ENCODE measurements at regions of chr6 and their contacts with region 1.

Region 1: DNA sequence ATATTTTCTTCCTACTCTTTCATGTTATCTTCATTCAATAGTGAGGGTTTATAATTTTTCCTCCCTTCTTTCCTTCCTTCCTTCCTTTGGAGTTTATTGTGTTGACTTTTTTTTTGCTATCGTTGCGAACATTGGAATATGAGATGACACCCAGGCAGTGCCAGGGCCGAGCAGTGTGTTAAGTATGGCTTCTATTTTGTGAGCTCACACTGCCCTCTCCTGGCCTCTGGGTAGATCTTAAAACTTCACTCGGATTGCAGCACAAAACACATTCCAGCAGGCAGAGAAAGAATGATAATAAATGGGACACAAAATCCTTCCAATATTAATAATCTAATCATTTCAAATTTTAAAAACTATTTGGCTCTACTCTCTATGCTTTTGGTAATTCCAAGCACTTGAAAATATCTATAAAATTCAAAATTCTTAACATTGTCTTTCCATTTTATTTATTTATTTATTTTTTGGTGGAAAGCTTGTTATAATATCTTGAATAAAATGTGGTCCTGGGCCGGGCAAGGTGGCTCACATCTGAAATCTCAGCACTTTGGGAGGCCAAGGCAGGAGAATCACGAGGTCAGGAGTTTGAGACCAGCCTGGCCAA is 147.4 kb upstream of the OLIG3 start:
- DNase-seq: peak; percentile 79
- H3K4me3 ChIP-seq: no peak overlapping the region
- H3K27ac ChIP-seq: no peak overlapping the region
- H3K4me1 ChIP-seq: no peaks in the 10 kb centered on the region
- H3K27me3 ChIP-seq: no peaks in the 10 kb centered on the region
- CTCF ChIP-seq: peak; percentile 54

Region 2: DNA sequence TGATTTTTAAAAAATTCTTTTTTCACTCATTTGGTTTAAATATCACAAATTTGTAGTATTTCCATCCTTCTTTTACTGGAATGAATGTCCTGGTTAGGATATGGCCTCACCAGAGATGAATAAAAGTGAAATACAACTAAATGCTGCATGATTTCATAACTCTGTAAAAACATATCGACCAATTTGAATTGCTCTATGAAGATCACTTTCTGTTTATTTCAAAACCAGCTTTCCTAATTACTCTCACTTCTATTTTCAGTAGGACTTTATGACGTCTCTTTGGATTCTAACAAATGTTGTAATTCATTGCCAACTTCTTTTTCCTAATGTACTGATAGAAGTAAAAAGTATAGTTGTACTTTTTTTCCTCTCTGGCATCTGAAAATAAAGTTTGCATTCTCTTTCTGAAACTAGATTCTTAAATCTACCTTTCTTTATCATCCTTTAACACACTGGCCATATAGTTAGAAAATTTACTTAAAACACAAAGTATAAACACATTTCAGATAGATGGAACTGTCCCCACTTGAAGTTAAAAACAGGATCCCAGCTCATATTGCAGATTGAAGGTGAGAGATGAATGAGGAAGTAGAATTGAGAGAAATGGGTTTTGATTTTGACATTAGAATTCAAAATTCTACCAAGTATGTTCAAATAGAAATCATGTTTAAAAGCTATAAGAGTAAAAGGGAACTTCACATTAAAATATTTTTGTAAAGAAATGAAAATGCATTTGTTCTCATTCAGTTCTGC is 556.5 kb before region 1 on chr6:
- intact Hi-C with region 1: loop called (anchors 5 kb)
- DNase-seq: no peak
- H3K4me3 ChIP-seq: no peak overlapping the region
- H3K27ac ChIP-seq: no peak overlapping the region
- H3K4me1 ChIP-seq: no peaks in the 10 kb centered on the region
- H3K27me3 ChIP-seq: no peaks in the 10 kb centered on the region
- CTCF ChIP-seq: no peak

Region 3: GRCh38 chr6:137094411-137095008 is 547.1 kb before region 1 on chr6:
- intact Hi-C with region 1: loop called (anchors 5 kb)
- DNase-seq: peak; percentile 66
- H3K4me3 ChIP-seq: no peak overlapping the region
- H3K27ac ChIP-seq: no peak overlapping the region
- H3K4me1 ChIP-seq: no peaks in the 10 kb centered on the region
- H3K27me3 ChIP-seq: no peaks in the 10 kb centered on the region
- CTCF ChIP-seq: peak; percentile 52

Region 4: DNA sequence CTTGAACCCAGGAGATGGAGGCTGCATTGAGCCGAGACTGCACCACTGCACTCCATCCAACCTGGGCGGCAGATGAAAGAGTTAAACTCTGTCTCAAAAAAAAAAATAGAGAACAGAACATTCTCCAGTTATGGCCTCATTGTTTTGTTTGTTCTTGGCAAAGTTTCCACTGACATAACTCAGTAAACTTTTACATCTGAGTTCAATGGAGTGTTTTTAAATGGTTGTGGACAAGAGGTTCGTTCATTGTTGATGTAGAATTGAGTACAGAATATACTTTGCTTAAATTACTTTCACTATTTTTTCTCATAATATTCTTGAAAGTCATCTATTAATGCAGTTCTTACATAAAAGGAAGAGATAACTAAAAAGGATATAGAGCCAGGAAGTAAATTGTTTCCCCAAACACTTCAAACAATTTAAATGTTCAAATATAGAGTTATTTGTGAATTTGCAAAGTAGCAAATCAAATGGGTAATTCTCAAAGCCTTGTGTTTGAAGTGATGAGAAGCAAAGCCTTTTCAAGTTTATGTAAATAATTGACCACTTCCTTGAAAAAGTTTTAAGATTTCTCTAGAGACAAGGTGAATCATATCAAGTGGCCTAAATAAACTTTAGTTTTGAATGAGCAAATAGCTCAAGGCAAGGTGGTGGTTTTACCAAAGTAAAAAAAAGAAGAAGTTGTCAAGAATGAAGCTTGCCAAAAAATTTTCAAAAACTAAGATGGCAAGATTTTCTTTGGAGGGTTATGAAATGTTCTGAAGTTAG is 380.0 kb before region 1 on chr6:
- intact Hi-C with region 1: loop called (anchors 10 kb)
- DNase-seq: no peak
- H3K4me3 ChIP-seq: no peak overlapping the region
- H3K27ac ChIP-seq: no peak overlapping the region
- H3K4me1 ChIP-seq: no peaks in the 10 kb centered on the region
- H3K27me3 ChIP-seq: no peaks in the 10 kb centered on the region
- CTCF ChIP-seq: no peak

Region 5: DNA sequence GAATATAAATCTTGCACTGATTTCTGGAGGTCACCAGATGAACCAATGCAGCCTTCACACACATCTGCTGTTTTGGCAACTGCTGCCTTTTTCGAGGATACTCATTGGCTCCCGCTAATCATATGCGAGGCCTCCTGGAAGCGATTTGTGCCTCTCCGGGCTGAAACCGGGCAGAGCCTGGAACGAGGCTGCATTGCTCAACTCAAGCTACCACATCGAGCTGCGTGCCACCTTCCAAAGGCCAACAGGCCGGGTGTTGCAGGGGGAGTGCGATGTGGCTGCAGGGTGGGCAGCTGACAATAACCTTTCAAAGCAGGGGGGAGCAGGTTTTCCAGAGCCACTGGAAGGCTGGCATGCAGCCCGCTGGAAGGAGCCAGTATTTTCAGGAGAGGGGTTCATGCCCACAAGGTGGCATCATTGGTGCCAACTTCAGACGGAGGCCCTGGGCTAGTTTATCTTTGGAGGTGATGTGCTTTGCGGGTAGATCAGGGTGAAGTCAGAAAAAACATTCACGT is 299.8 kb before region 1 on chr6:
- intact Hi-C with region 1: loop called (anchors 10 kb)
- DNase-seq: peak; percentile 38
- H3K4me3 ChIP-seq: no peak overlapping the region
- H3K27ac ChIP-seq: no peak overlapping the region
- H3K4me1 ChIP-seq: no peaks in the 10 kb centered on the region
- H3K27me3 ChIP-seq: no peaks in the 10 kb centered on the region
- CTCF ChIP-seq: peak; percentile 18

Region 6: DNA sequence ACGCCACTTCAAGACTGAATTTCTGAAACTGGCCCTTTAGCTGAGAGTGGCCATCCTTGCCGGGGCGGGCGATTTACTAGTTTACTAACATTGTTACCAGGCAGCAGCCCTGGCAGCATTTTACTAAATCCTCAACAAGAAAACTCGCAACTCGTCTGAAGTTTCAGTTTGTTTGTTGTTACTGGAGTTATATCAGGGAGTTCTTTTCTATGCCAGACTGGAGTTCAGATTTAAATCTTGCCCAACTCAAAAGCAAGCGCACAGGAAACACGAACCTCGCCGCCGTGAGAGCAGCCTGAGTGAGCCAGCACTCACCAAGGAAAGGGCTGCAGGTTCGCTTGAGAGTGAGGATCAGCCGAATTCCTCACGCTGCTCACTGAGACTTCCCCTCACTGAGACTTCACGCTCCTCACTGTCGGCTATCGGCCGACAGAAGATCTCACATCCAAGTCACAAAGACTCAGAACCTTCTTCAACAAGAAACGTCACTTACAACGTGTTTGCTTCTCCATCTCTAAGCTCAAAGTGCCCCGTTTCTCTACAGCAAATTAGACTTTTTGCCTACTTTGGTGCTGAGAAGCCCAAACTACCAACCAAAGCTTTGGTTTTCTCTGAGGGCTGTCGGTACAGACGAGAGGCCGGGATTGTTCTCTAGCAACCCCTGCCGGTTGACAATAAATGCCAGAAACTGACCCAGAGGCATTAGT is 226.3 kb before region 1 on chr6:
- intact Hi-C with region 1: loop called (anchors 10 kb)
- DNase-seq: peak; percentile 69
- H3K4me3 ChIP-seq: peak overlapping the region; percentile 30
- H3K27ac ChIP-seq: no peak overlapping the region
- H3K4me1 ChIP-seq: no peaks in the 10 kb centered on the region
- H3K27me3 ChIP-seq: no peaks in the 10 kb centered on the region
- CTCF ChIP-seq: peak; percentile 69

Region 7: GRCh38 chr6:137571854-137572253 is 69.7 kb before region 1 on chr6:
- intact Hi-C with region 1: no loop called
- DNase-seq: peak; percentile 55
- H3K4me3 ChIP-seq: no peak overlapping the region
- H3K27ac ChIP-seq: no peak overlapping the region
- H3K4me1 ChIP-seq: no peaks in the 10 kb centered on the region
- H3K27me3 ChIP-seq: no peaks in the 10 kb centered on the region
- CTCF ChIP-seq: peak; percentile 58

Region 8: DNA sequence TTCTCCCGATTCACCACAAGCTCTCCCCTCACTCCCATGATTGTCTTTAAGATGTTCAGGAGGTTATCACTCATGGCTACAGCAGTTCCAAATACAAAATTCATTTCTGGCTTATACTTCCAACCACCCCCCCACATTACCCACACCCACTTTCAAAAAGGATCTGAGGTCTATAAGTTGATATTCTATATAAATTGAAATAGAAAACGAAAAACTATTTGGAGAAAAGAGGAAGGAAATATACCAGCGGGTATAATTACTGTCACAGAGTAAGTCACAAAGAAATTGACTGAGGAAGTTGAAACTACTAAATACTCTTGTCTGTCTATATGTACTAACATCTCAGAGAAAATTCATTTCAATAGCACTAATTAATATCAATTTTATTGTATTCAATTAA is 112.8 kb after region 1 on chr6:
- intact Hi-C with region 1: no loop called
- DNase-seq: no peak
- H3K4me3 ChIP-seq: no peak overlapping the region
- H3K27ac ChIP-seq: no peak overlapping the region
- H3K4me1 ChIP-seq: no peaks in the 10 kb centered on the region
- H3K27me3 ChIP-seq: no peaks in the 10 kb centered on the region
- CTCF ChIP-seq: no peak